ENCODE measurements at regions of chr6 and their contacts with region 1.

Region 1: GRCh38 chr6:42901536-42901957 is 14.3 kb upstream of the PTCRA start:
- DNase-seq: peak; percentile 83
- ATAC-seq: peak; percentile 96
- H3K4me3 ChIP-seq: peak overlapping the region in 1 of 2 experiments; percentile 12; a peak in 1 of 4 replicates
- H3K27ac ChIP-seq: no peak overlapping the region
- H3K4me1 ChIP-seq: peaks cover 0 to 11% of the 10 kb centered on the region in 2 experiments; a peak in 3 of 4 replicates
- H3K27me3 ChIP-seq: no peaks in the 10 kb centered on the region
- CTCF ChIP-seq: peak; percentile 72 to 96 (median 84)
- POLR2A ChIP-seq: no peak
- RAD21 ChIP-seq: peak; percentile 99

Region 2: DNA sequence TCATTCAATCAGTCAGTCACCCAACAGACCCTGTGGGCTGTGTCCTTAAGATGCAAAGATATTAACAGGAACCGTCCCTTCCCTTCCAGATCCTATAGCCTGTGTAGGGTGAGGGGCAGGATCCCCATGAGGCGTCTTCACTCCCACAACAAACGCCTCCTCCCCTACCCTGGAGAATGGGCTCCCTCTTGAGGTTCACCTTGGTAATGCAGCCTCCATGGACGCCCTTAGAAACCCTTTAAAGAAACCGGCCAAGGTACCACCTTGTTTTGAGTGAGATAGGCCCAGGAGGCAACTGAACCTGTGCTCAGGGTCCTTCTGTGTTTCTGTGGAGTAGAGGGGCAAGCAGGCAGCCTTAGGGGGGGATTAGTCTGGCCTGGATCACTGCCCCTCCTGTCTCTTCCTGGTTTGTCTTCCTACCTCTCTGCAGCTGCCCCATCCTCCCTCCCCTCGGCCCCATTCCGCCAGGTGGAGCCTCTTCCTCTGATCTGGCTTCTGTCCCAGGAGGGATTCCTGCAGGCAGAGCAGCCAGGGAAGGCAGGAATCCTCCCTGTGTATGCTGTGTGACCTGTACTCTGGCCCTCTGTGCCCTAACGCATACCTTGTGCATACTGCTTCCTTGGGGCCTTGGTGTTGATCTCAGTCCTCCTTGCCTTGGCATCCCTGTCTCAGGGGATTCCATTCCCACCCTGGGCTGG is 735.0 kb before region 1 on chr6:
- CTCF ChIA-PET with region 1: no interaction called
- POLR2A ChIA-PET with region 1: no interaction called
- RAD21 ChIA-PET with region 1: no interaction called
- intact Hi-C with region 1: loop called (anchors 2 kb)
- DNase-seq: peak; percentile 63
- ATAC-seq: peak; percentile 93
- H3K4me3 ChIP-seq: no peak overlapping the region
- H3K27ac ChIP-seq: peak overlapping the region; percentile 31; the same call in 1 of the 2 replicates
- H3K4me1 ChIP-seq: peaks cover 3 to 13% of the 10 kb centered on the region in 2 experiments; a peak in 3 of 4 replicates
- H3K27me3 ChIP-seq: no peaks in the 10 kb centered on the region
- CTCF ChIP-seq: peak; percentile 90 to 98 (median 98)
- POLR2A ChIP-seq: no peak
- RAD21 ChIP-seq: peak; percentile 94

Region 3: DNA sequence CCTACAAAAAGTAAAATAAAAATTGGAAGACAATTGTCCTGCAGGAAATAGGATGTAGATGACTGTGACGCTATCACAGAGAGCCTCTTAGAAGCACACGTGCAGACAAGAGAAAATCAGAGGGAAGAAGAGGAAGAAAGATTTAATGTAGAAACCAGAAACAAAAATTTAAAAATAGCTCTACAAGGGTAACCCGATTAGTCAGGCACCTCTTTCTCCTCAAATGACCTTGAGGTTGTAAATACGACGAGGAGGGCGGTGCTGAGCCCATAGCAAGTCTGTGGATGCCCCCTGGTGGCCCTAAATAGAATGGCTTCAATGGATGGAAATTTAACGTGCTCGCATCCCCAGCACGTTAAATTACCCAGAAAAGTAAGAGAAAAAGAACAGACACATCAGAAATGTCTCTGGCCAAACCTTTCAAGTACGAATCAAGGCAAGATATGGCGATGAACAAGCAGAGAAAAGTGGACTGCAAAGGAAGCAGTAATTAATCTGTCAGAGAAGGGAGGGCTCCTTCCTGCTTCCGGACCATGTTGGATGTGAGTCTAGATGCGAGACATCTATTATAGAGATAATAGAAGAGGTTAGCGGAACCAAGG is 175.0 kb before region 1 on chr6:
- CTCF ChIA-PET with region 1: interaction called, 3 read pairs
- POLR2A ChIA-PET with region 1: no interaction called
- RAD21 ChIA-PET with region 1: no interaction called
- intact Hi-C with region 1: loop called (anchors 1 kb)
- DNase-seq: peak; percentile 75
- ATAC-seq: peak; percentile 93
- H3K4me3 ChIP-seq: no peak overlapping the region
- H3K27ac ChIP-seq: no peak overlapping the region
- H3K4me1 ChIP-seq: peaks cover 4 to 9% of the 10 kb centered on the region in 2 experiments; a peak in 3 of 4 replicates
- H3K27me3 ChIP-seq: no peaks in the 10 kb centered on the region
- CTCF ChIP-seq: peak; percentile 87 to 94 (median 90)
- POLR2A ChIP-seq: no peak
- RAD21 ChIP-seq: peak; percentile 98

Region 4: GRCh38 chr6:43143235-43144124 is 241.9 kb after region 1 on chr6:
- CTCF ChIA-PET with region 1: interaction called, 11 read pairs
- POLR2A ChIA-PET with region 1: no interaction called
- RAD21 ChIA-PET with region 1: no interaction called
- intact Hi-C with region 1: loop called (anchors 1 kb)
- DNase-seq: peak; percentile 24
- ATAC-seq: peak; percentile 99
- H3K4me3 ChIP-seq: no peak overlapping the region
- H3K27ac ChIP-seq: no peak overlapping the region
- H3K4me1 ChIP-seq: peaks cover 3 to 9% of the 10 kb centered on the region in 2 experiments; a peak in 1 of 4 replicates
- H3K27me3 ChIP-seq: no peaks in the 10 kb centered on the region
- CTCF ChIP-seq: peak; percentile 92 to 96 (median 94)
- POLR2A ChIP-seq: no peak
- RAD21 ChIP-seq: peak; percentile 98

Region 5: GRCh38 chr6:43496370-43497128 is 595.0 kb after region 1 on chr6:
- CTCF ChIA-PET with region 1: no interaction called
- POLR2A ChIA-PET with region 1: no interaction called
- RAD21 ChIA-PET with region 1: no interaction called
- intact Hi-C with region 1: loop called (anchors 5 kb)
- DNase-seq: no peak
- ATAC-seq: peak; percentile 79
- H3K4me3 ChIP-seq: peak overlapping the region; percentile 12 to 35; a peak in 3 of 4 replicates
- H3K27ac ChIP-seq: peak overlapping the region; percentile 57
- H3K4me1 ChIP-seq: peaks cover 27 to 49% of the 10 kb centered on the region in 2 experiments
- H3K27me3 ChIP-seq: no peaks in the 10 kb centered on the region
- CTCF ChIP-seq: peak; percentile 74 to 84 (median 83)
- POLR2A ChIP-seq: no peak
- RAD21 ChIP-seq: peak; percentile 89